Kidney (tissue), 22 donors: ENCODE measurements at regions of chr1 and their contacts with region 1.

Region 1: DNA sequence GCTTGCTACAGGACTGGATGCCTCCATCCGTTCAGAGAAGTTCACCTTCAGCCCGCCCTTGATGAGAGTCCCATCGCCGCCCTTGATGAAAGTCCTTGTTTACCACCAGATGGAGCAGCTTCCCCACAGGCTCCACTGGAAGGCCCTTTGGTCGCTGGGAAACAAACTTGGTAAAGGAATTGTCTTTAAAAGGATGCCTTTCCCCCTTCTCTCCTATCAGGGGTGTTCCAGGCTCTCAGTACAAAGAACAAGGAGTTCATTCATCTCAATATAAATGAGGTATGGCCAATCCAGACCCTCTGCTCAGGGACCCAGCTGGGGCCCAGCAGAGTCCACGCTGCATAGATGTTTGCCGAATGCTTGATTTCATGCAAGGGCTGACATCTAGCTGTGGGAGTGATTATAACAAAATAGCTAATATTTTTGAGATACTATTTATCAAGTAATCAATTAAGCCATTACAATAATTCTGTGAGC is 50.8 kb downstream of the CAPN9 start:
- DNase-seq: peak in 4 of 5 donors; percentile 58 to 87 (median 70)
- H3K4me3 ChIP-seq: no peak overlapping the region
- H3K27ac ChIP-seq: no peak overlapping the region
- H3K4me1 ChIP-seq: no peaks in the 10 kb centered on the region
- H3K27me3 ChIP-seq: no peaks in the 10 kb centered on the region
- CTCF ChIP-seq: peak; percentile 64

Region 2: DNA sequence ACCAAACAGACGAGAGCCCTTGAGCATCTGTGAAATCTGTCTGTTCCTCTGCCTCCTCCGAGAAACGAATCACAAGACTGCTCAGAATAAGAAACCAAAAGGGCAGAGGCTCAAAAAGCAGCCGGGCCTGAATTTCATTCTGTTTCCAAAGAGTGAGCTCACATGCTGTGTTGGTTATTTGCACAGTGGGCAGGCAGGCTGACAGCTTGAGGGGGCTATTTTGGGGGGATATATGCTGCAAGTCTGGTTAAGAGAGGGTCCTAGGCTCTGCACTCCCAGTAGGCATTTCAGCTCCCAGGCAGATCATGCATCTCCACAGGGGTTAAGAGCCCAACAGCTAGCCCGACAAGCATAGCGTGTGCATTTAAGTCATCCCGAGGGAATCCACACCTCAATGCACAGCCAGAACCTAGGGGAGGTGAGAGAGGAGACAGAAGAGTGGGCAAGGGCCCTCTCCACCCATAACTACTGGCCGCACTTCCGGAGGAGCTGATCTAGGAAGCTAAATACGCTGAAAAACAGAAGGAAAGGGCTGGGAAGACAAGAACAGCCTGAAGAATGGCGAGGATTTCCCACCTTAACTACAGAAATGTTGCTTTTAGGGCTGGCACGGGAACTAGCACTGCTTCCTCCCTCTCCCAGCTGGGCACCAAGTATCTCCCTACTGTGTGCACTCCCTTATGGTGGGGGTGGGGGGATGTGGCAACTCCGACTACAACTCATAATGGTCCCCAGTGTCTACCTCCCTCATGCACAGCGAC is 375.6 kb before region 1 on chr1:
- intact Hi-C with region 1: no loop called
- DNase-seq: peak in 1 of 5 donors; percentile 5
- H3K4me3 ChIP-seq: no peak overlapping the region
- H3K27ac ChIP-seq: no peak overlapping the region
- H3K4me1 ChIP-seq: peaks cover 0 to 9% (median 0%) of the 10 kb centered on the region in 3 donors
- H3K27me3 ChIP-seq: peaks cover 25% of the 10 kb centered on the region
- CTCF ChIP-seq: no peak

Region 3: GRCh38 chr1:230753586-230754251 is 44.3 kb before region 1 on chr1:
- intact Hi-C with region 1: no loop called
- DNase-seq: peak in 4 of 5 donors; percentile 66 to 83 (median 78)
- H3K4me3 ChIP-seq: no peak overlapping the region
- H3K27ac ChIP-seq: no peak overlapping the region
- H3K4me1 ChIP-seq: peaks cover 0 to 3% (median 2%) of the 10 kb centered on the region in 3 donors
- H3K27me3 ChIP-seq: no peaks in the 10 kb centered on the region
- CTCF ChIP-seq: no peak

Region 4: DNA sequence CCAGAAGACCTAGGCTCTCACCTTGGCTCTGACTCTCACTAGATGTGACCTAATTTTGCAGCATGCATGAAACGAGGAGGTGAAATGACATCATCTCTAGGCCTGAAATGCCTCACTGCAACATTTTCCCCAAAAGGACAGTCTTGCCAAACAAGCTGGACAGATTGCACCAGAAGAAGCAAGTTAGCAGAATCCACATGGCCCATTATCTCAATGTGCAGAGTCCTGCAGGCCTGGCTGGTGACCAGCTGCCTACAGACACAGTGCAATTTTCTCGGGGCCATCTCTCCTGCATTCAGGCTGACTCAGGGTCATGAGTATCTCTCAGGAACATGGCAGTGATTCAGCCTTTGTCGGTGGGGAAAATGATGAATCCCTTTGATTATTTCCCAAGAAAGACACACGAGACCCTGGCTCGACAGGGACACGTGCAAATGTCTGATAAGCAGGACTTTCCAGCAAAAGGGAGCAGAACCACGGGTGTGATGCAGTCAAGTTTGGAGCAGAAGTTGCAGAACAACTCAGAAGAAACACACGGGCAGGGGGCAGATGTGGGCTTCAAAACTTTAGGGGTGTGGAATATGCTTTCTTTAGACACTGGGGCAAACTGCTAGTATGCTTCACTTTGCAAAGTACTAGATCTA is 402.5 kb after region 1 on chr1:
- intact Hi-C with region 1: loop called (anchors 10 kb)
- DNase-seq: peak in 1 of 5 donors; percentile 24
- H3K4me3 ChIP-seq: no peak overlapping the region
- H3K27ac ChIP-seq: no peak overlapping the region
- H3K4me1 ChIP-seq: no peaks in the 10 kb centered on the region
- H3K27me3 ChIP-seq: no peaks in the 10 kb centered on the region
- CTCF ChIP-seq: no peak